ENCODE measurements at regions of chr19 and their contacts with region 1.

Region 1: DNA sequence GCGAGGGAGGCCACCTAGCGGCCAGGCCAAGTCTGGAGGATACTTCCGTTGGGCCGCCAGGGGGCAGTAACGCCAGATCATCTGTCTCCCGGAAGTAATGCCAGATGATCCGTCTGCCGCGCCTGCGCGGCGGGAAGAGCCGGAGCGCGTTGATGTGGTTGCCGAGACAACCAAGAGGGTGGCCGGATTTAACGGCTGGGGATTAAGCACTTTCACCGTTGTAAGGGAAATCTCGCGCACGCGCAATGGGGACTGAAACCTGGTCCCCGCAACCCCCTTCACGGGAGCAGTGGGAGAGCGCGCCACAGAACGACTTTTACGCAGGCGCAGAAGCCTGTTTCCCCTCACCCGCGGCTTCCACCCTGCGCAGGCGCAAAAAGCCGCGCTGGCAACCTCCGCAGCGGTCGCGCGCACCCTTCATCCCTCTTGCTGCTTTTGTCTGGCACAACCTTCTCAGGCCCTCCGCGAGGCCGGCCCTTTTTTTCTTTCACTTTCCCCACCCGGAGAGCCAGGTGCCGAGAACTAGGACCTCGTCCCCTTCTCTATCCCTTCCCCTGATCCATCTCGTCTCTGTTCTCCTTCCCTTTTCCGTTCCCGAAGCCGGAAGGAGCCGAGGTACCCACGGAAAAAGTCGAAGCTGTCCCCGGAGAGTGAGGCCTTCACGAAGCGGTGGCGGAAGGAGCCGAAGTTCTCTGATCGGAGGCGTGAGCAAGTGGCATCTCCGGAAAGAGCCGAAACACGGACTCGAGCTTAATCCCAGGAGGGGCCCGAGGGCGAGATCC is 886 bp upstream of the U2AF2 start:
- DNase-seq: peak; percentile 98 to 100
- H3K4me3 ChIP-seq: peak overlapping the region; percentile 95
- H3K4me1 ChIP-seq: peaks cover 11% of the 10 kb centered on the region
- H3K27me3 ChIP-seq: no peaks in the 10 kb centered on the region

Region 2: GRCh38 chr19:54189735-54190502 is 1464.0 kb before region 1 on chr19:
- in situ Hi-C with region 1: loop called (anchors 25 kb)
- DNase-seq: peak; percentile 99 to 100
- H3K4me3 ChIP-seq: peak overlapping the region; percentile 99
- H3K4me1 ChIP-seq: peaks cover 6% of the 10 kb centered on the region; the same call in 1 of the 2 replicates
- H3K27me3 ChIP-seq: no peaks in the 10 kb centered on the region

Region 3: DNA sequence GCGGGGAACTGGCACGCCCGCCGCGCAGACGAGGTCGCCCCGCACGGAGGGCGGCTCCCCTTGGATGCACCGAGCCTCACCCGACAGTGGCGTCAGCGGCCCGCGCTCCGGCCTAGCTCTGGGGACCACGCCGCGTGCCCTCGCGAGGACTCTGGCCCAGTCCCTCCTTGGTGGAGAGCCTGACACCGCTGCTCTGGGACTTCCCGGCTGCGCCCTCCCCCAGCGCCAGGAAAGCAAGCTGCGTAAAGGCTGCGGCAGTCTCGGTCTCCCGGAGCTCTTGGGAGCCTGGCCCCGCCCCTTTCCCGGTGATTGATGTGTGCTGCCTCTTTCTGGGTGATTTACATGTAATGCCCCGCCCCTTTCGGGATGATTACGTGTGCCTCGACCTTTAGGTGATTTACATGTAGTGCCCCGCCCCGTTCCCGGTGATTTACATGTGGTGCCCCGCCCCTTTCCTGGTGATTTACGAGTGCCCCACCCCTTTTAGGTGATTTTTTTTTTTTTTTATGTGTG is 1190.4 kb before region 1 on chr19 and contains the start of gene LENG9:
- in situ Hi-C with region 1: loop called (anchors 25 kb)
- DNase-seq: peak; percentile 91 to 99
- H3K4me3 ChIP-seq: peak within 1 kb of the TSS; percentile 59
- H3K4me1 ChIP-seq: no peaks in the 10 kb centered on the region; the same call in none of the 2 replicates
- H3K27me3 ChIP-seq: no peaks in the 10 kb centered on the region